ENCODE measurements at regions of chr11 and their contacts with region 1.

Region 1: GRCh38 chr11:92552942-92553341 is 328.3 kb downstream of the FAT3 start:
- DNase-seq: peak; percentile 1
- H3K4me3 ChIP-seq: no peak overlapping the region
- H3K27ac ChIP-seq: no peak overlapping the region
- H3K4me1 ChIP-seq: no peaks in the 10 kb centered on the region
- H3K27me3 ChIP-seq: peaks cover 4% of the 10 kb centered on the region
- CTCF ChIP-seq: peak; percentile 26 to 31

Region 2: DNA sequence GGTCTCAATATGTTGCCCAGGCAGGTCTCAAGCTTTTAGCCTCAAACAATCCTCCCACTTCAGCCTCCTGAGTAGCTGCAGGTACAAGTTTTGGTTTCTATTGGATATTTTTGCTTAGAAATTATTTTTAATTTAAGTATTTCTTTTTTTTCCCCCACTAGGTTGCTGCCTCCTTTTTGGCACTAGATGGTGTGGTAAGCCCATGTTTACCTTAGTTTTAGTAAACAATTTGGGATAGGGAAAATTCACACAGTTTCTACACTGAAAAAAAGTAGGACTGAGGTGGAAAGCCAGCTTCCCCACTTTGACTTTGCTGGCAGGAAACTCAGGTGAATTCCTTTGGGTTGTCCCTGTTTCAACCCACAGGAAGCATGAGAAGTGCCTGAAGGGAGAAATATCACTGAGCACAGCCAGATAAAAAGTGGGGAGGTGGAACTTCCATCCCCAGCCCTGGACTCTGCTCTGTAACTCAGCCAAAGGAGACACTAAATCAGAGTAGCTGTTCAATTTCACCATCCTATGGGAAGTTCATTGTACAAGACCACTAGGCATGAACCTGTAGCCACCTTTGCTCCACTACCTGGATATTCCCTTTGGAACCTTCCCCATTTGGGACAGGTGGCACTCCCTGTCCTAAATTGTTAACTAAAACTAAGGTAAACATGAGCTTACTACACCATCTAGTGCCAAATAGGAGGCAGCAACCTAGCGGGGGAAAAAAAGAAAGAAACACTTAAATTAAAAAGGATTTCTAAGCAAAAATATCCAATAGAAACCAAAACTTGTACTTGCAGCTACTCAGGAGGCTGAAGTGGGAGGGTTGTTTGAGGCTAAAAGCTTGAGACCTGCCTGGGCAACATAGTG is 482.7 kb before region 1 on chr11:
- CTCF ChIA-PET with region 1: no interaction called
- dilution Hi-C with region 1: no loop called
- in situ Hi-C with region 1: no loop called
- intact Hi-C with region 1: loop called (anchors 2 kb)
- DNase-seq: peak; percentile 1
- H3K4me3 ChIP-seq: no peak overlapping the region
- H3K27ac ChIP-seq: no peak overlapping the region
- H3K4me1 ChIP-seq: no peaks in the 10 kb centered on the region
- H3K27me3 ChIP-seq: no peaks in the 10 kb centered on the region
- CTCF ChIP-seq: peak in 1 of 2 donors; percentile 26

Region 3: DNA sequence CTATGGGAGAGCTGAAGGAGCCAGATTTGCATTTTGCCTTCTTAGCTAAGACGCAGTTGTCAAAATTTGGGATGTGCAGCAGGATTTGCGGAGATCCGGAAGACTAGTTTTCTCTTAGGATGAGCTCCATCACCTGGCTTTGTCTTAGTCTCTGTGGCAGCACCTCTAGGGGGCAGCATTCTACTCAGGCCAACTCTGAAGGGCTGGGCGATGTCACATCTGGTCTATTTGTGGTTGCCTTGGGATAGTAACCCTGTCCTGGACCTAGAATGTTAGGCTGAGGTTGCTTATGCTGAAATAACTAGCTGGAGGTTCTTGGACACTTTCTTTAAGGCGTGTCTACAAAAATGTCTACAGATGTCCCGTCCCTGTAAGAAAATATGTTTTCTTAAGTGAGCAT is 212.1 kb before region 1 on chr11:
- CTCF ChIA-PET with region 1: no interaction called
- dilution Hi-C with region 1: no loop called
- in situ Hi-C with region 1: no loop called
- intact Hi-C with region 1: loop called (anchors 5 kb)
- DNase-seq: peak; percentile 20
- H3K4me3 ChIP-seq: no peak overlapping the region
- H3K27ac ChIP-seq: no peak overlapping the region
- H3K4me1 ChIP-seq: no peaks in the 10 kb centered on the region
- H3K27me3 ChIP-seq: no peaks in the 10 kb centered on the region
- CTCF ChIP-seq: peak; percentile 63 to 78